ENCODE measurements at regions of chr16 and their contacts with region 1.

Region 1: GRCh38 chr16:2513405-2514322 is at the start of gene ATP6V0C:
- DNase-seq: peak; percentile 96
- H3K4me3 ChIP-seq: peak within 1 kb of the TSS; percentile 92 to 100 (median 100)
- H3K27ac ChIP-seq: peak within 1 kb of the TSS; percentile 97 to 99 (median 98)
- H3K4me1 ChIP-seq: peaks cover 0 to 64% (median 60%) of the 10 kb centered on the region in 4 donors
- H3K27me3 ChIP-seq: no peaks in the 10 kb centered on the region
- CTCF ChIP-seq: no peak
- EP300 ChIP-seq: peak in 1 of 4 donors; percentile 1
- POLR2A ChIP-seq: peak; percentile 79 to 80
- total RNA-seq, gene ATP6V0C: 33.2 to 51.5 (median 42.5) TPM

Region 2: GRCh38 chr16:2474877-2475412 is 38.7 kb before region 1 on chr16 and contains the start of gene TBC1D24:
- intact Hi-C with region 1: loop called (anchors 5 kb)
- DNase-seq: peak; percentile 92
- H3K4me3 ChIP-seq: peak within 1 kb of the TSS; percentile 60 to 88 (median 74)
- H3K27ac ChIP-seq: peak within 1 kb of the TSS; percentile 84 to 89 (median 88)
- H3K4me1 ChIP-seq: peaks cover 0 to 48% (median 39%) of the 10 kb centered on the region in 4 donors
- H3K27me3 ChIP-seq: peaks cover 25 to 37% (median 35%) of the 10 kb centered on the region in 3 donors
- CTCF ChIP-seq: no peak
- EP300 ChIP-seq: no peak
- POLR2A ChIP-seq: peak in 1 of 2 donors; percentile 20
- total RNA-seq, gene TBC1D24: 5.9 to 16.1 (median 10.5) TPM

Region 3: DNA sequence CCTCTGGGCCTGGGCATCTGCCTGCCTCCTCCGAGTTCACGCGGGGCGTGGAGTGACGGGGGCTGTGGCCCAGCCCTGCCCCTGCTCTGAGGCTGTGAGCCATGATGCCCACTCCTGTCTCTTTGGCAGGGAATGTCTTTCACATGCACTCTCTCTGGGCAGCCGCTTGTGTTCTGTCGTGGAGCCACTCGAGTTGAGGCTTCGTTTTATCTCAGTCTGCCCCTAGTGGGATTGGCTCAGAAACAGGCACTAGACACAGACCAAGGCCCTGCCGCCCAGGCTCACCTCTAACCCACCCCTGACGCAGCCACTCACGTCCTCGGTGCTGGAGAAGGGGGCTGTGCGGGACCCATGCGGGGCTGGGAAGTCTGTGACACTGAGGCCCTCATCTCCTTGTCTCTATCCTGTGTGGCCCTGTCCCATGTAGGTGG is 101.1 kb after region 1 on chr16:
- intact Hi-C with region 1: no loop called
- DNase-seq: no peak
- H3K4me3 ChIP-seq: no peak overlapping the region
- H3K27ac ChIP-seq: no peak overlapping the region
- H3K4me1 ChIP-seq: no peaks in the 10 kb centered on the region
- H3K27me3 ChIP-seq: no peaks in the 10 kb centered on the region
- CTCF ChIP-seq: no peak
- EP300 ChIP-seq: no peak
- POLR2A ChIP-seq: no peak